Gastrocnemius medialis (tissue), 4 donors: ENCODE measurements at regions of chr5 and their contacts with region 1.

Region 1: GRCh38 chr5:902129-902916 is 9.6 kb downstream of the TRIP13 start:
- DNase-seq: peak in 1 of 2 donors; percentile 8
- ATAC-seq: no peak
- H3K4me3 ChIP-seq: no peak overlapping the region
- H3K27ac ChIP-seq: no peak overlapping the region
- H3K4me1 ChIP-seq: peaks cover 0 to 4% of the 10 kb centered on the region in 2 donors
- H3K27me3 ChIP-seq: no peaks in the 10 kb centered on the region
- CTCF ChIP-seq: no peak
- POLR2A ChIP-seq: no peak

Region 2: DNA sequence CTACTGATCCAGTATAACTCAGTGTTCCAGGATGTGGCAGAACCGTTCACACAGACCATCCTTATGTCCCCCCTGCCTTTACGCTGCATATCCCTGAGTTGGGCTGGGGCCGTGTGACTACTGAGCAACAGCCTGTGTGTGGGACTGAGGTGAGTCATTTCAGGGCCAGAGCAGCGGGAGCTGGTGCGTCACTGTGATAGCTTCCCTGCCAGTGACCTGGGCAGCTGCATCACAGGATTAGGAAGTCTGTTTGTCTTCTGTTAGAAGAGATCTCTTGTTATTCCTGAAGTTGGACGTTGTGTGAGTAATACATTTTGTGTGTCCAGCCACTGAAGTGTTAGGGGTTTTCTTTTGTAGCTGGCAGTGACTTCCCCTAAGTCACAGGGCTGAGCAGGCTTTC is 244.8 kb before region 1 on chr5:
- in situ Hi-C with region 1: loop called in 2 of 4 experiments (anchors 10 kb)
- intact Hi-C with region 1: no loop called
- DNase-seq: no peak
- ATAC-seq: no peak
- H3K4me3 ChIP-seq: no peak overlapping the region
- H3K27ac ChIP-seq: no peak overlapping the region
- H3K4me1 ChIP-seq: no peaks in the 10 kb centered on the region
- H3K27me3 ChIP-seq: no peaks in the 10 kb centered on the region
- CTCF ChIP-seq: no peak
- POLR2A ChIP-seq: no peak

Region 3: GRCh38 chr5:671459-672328 is 230.6 kb before region 1 on chr5:
- in situ Hi-C with region 1: loop called in 3 of 4 experiments (anchors 5 to 10 kb)
- intact Hi-C with region 1: loop called (anchors 1 kb)
- DNase-seq: peak; percentile 43 to 66
- ATAC-seq: peak; percentile 74 to 75
- H3K4me3 ChIP-seq: peak overlapping the region in 2 of 4 donors; percentile 9 to 36
- H3K27ac ChIP-seq: peak overlapping the region in 3 of 4 donors; percentile 12 to 84 (median 15)
- H3K4me1 ChIP-seq: peaks cover 36 to 47% of the 10 kb centered on the region in 2 donors
- H3K27me3 ChIP-seq: no peaks in the 10 kb centered on the region
- CTCF ChIP-seq: peak; percentile 89 to 98 (median 95)
- POLR2A ChIP-seq: no peak